MCF 10A (cell line): ENCODE measurements at regions of chr2 and their contacts with region 1.

Region 1: GRCh38 chr2:25228848-25229278 is 60.5 kb upstream of the POMC start:
- DNase-seq: peak; percentile 81
- H3K4me3 Mint-ChIP-seq: no peak overlapping the region
- H3K27ac Mint-ChIP-seq: no peak overlapping the region
- H3K4me1 Mint-ChIP-seq: no peaks in the 10 kb centered on the region
- H3K27me3 Mint-ChIP-seq: no peaks in the 10 kb centered on the region
- CTCF ChIP-seq: peak; percentile 60

Region 2: GRCh38 chr2:25238920-25239319 is 10.1 kb after region 1 on chr2:
- CTCF ChIA-PET with region 1: interaction called, 14 read pairs
- POLR2A ChIA-PET with region 1: no interaction called
- intact Hi-C with region 1: no loop called
- DNase-seq: no peak
- H3K4me3 Mint-ChIP-seq: no peak overlapping the region
- H3K27ac Mint-ChIP-seq: no peak overlapping the region
- H3K4me1 Mint-ChIP-seq: no peaks in the 10 kb centered on the region
- H3K27me3 Mint-ChIP-seq: no peaks in the 10 kb centered on the region
- CTCF ChIP-seq: no peak

Region 3: DNA sequence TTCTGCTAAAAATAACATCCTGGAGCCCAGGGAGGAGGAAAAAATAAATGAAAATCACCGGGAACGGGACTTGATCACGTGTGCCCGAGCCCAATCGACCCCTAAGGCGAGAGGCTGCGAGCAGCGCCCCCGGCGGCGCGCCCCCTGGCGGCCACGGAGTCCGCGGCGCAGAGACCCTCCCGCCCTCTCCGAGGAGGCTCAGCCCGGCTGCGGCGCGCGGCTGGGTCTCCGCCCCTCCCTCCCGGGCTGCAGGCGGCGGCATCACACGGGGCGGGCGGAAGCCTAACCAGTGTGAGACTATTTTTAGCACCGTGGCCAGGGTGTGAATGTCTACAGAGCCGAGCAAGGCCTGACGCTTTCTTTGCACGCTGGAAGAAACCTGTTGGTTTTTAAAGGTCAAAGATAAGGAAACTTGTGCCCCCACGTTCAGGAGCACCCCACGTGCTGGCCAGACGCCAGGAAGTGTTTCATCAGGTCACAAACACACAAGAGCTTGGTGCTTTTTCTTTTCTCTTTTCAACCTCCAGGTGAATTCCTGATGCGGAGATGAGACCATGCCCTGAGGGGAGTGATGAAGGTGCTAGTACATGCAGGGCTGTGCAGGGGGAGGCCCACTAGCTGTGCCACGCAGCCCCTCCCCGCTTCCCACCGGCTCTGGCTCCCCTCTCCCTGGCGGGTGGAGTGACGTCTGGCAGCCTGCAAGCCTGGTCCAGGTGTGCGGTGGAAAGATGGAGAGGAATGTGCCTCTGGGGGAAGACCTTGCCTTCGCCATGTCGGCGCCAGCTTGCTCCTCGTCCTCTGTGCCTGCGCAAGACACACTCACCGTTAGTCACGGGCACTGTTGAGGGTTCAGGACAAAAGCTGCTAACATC is 148.1 kb after region 1 on chr2:
- CTCF ChIA-PET with region 1: no interaction called
- POLR2A ChIA-PET with region 1: no interaction called
- intact Hi-C with region 1: no loop called
- DNase-seq: peak; percentile 87
- H3K4me3 Mint-ChIP-seq: peak overlapping the region; percentile 64
- H3K27ac Mint-ChIP-seq: no peak overlapping the region
- H3K4me1 Mint-ChIP-seq: peaks cover 9% of the 10 kb centered on the region
- H3K27me3 Mint-ChIP-seq: no peaks in the 10 kb centered on the region
- CTCF ChIP-seq: peak; percentile 86